Endothelial cell of umbilical vein (primary cell): ENCODE measurements at regions of chr5 and their contacts with region 1.

Region 1: GRCh38 chr5:31487506-31487905 is 44.4 kb downstream of the DROSHA start:
- DNase-seq: peak; percentile 29
- H3K4me3 ChIP-seq: no peak overlapping the region
- H3K27ac ChIP-seq: no peak overlapping the region
- H3K4me1 ChIP-seq: peaks cover 30% of the 10 kb centered on the region
- H3K27me3 ChIP-seq: no peaks in the 10 kb centered on the region
- CTCF ChIP-seq: no peak
- POLR2A ChIP-seq: no peak

Region 2: GRCh38 chr5:31232273-31232888 is 255.1 kb before region 1 on chr5:
- CTCF ChIA-PET with region 1: no interaction called
- POLR2A ChIA-PET with region 1: no interaction called
- dilution Hi-C with region 1: no loop called
- intact Hi-C with region 1: loop called (anchors 5 kb)
- DNase-seq: peak; percentile 17
- H3K4me3 ChIP-seq: no peak overlapping the region
- H3K27ac ChIP-seq: no peak overlapping the region
- H3K4me1 ChIP-seq: no peaks in the 10 kb centered on the region
- H3K27me3 ChIP-seq: no peaks in the 10 kb centered on the region
- CTCF ChIP-seq: peak; percentile 25 to 47
- POLR2A ChIP-seq: no peak

Region 3: GRCh38 chr5:31397926-31398557 is 89.5 kb before region 1 on chr5:
- CTCF ChIA-PET with region 1: interaction called, 10 read pairs
- POLR2A ChIA-PET with region 1: no interaction called
- dilution Hi-C with region 1: no loop called
- intact Hi-C with region 1: no loop called
- DNase-seq: peak; percentile 79
- H3K4me3 ChIP-seq: peak overlapping the region in 1 of 3 experiments; percentile 31
- H3K27ac ChIP-seq: no peak overlapping the region
- H3K4me1 ChIP-seq: peaks cover 4% of the 10 kb centered on the region
- H3K27me3 ChIP-seq: no peaks in the 10 kb centered on the region
- CTCF ChIP-seq: peak in 1 of 2 donors; percentile 9
- POLR2A ChIP-seq: no peak